CD8-positive, alpha-beta T cell (primary cell): ENCODE measurements at regions of chr11 and their contacts with region 1.

Region 1: DNA sequence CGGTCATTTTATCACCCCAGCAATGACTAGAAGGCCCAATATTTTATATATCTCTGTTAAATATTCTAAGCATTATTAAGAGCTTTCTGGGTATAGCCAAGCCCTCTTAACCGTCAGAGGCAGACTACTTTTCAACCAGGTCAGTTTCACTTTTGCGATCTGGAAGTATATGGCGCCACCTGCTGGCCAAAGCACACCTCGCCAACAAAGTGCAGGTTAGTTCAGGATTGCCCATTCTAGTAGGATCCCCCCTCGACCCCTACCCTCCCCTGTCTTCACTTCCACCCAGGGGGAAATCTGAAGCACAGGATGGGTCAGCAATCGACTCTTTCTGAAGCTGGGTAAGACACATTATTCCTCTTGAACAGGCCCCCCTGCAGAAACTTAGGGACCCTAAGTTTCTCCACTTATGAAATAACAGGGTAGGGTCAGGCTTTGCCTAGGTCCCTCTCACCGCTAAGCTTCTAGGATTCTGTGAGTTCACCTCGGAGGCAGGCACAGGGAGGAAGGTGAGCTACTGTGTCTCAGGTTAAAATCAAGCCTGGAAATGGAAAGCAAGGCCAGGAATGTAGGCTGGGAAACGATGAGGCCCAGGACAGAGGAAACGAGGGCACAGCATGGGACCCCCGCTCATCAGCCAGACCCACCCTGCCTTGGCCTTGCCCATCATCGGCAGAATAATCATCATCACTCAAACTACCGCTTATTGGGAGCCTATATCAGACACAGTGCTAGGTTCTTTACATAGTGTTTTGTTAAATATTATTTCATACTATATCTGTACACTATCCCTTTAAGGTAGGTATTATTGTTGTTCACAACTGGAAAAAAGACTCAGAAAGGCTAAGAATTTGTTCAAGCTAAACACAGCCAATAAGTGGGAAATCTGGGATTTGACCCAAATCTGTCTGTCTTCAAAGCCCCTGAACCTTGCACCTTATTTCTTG is 35.6 kb downstream of the KCNJ1 start:
- DNase-seq: peak; percentile 75 to 93 (median 88)
- ATAC-seq: peak; percentile 81
- H3K4me3 ChIP-seq: peak overlapping the region; percentile 11 to 26
- H3K4me3 Mint-ChIP-seq: peak overlapping the region; percentile 55
- H3K27ac ChIP-seq: peak overlapping the region; percentile 31 to 84
- H3K27ac Mint-ChIP-seq: peak overlapping the region; percentile 80
- H3K4me1 ChIP-seq: peaks cover 9% of the 10 kb centered on the region
- H3K4me1 Mint-ChIP-seq: peaks cover 18% of the 10 kb centered on the region
- H3K27me3 ChIP-seq: no peaks in the 10 kb centered on the region
- H3K27me3 Mint-ChIP-seq: no peaks in the 10 kb centered on the region
- CTCF ChIP-seq: peak; percentile 87

Region 2: GRCh38 chr11:128026596-128026995 is 804.9 kb before region 1 on chr11:
- CTCF ChIA-PET with region 1: interaction called, 22 read pairs
- POLR2A ChIA-PET with region 1: interaction called, 3 read pairs
- intact Hi-C with region 1: loop called (anchors 1 to 2 kb)
- DNase-seq: no peak
- ATAC-seq: no peak
- H3K4me3 ChIP-seq: no peak overlapping the region
- H3K4me3 Mint-ChIP-seq: no peak overlapping the region
- H3K27ac ChIP-seq: no peak overlapping the region
- H3K27ac Mint-ChIP-seq: no peak overlapping the region
- H3K4me1 ChIP-seq: no peaks in the 10 kb centered on the region
- H3K4me1 Mint-ChIP-seq: peaks cover 2% of the 10 kb centered on the region
- H3K27me3 ChIP-seq: no peaks in the 10 kb centered on the region
- H3K27me3 Mint-ChIP-seq: peaks cover 5% of the 10 kb centered on the region
- CTCF ChIP-seq: no peak

Region 3: DNA sequence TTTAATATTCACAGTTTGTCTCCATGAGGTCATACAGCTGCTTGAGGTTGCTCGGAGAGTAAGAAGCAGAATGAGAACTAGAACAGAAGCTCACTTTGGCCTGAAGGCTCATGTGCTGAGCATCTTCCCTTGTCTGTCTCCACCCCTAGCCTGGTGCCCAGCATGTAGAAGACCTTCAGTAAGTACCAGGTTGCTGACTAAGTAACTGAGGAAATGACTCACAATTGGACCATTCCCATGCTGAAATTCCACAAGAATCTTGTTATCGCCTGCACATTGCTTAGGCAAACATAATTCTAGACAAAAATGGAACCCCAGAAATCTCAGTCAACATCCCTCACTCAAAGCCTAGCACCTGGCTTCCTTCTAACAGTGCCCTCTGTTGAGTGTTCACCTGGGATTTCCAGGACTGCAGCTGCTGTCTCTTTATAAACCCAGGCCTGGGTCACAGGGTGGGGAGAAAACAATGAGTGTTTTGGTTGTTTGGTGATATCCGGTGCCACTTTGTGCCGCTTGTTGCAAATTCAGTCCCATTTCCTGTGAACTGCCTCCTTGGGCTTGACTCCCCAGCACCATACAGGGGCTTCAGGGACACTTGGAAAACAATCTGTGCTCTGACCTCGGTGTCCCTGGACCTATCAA is 650.9 kb before region 1 on chr11:
- CTCF ChIA-PET with region 1: interaction called, 162 read pairs
- POLR2A ChIA-PET with region 1: no interaction called
- intact Hi-C with region 1: no loop called
- DNase-seq: peak in 1 of 9 experiments; percentile 23
- ATAC-seq: no peak
- H3K4me3 ChIP-seq: no peak overlapping the region
- H3K4me3 Mint-ChIP-seq: no peak overlapping the region
- H3K27ac ChIP-seq: no peak overlapping the region
- H3K27ac Mint-ChIP-seq: no peak overlapping the region
- H3K4me1 ChIP-seq: no peaks in the 10 kb centered on the region
- H3K4me1 Mint-ChIP-seq: no peaks in the 10 kb centered on the region
- H3K27me3 ChIP-seq: no peaks in the 10 kb centered on the region
- H3K27me3 Mint-ChIP-seq: no peaks in the 10 kb centered on the region
- CTCF ChIP-seq: no peak

Region 4: GRCh38 chr11:128725630-128726319 is 105.7 kb before region 1 on chr11:
- CTCF ChIA-PET with region 1: interaction called, 19 read pairs
- POLR2A ChIA-PET with region 1: no interaction called
- intact Hi-C with region 1: no loop called
- DNase-seq: peak; percentile 19 to 95 (median 67)
- ATAC-seq: peak; percentile 56
- H3K4me3 ChIP-seq: peak overlapping the region; percentile 16 to 25
- H3K4me3 Mint-ChIP-seq: peak overlapping the region; percentile 87
- H3K27ac ChIP-seq: peak overlapping the region; percentile 6 to 69
- H3K27ac Mint-ChIP-seq: peak overlapping the region; percentile 89
- H3K4me1 ChIP-seq: peaks cover 99% of the 10 kb centered on the region
- H3K4me1 Mint-ChIP-seq: peaks cover 98% of the 10 kb centered on the region
- H3K27me3 ChIP-seq: no peaks in the 10 kb centered on the region
- H3K27me3 Mint-ChIP-seq: no peaks in the 10 kb centered on the region
- CTCF ChIP-seq: no peak

Region 5: DNA sequence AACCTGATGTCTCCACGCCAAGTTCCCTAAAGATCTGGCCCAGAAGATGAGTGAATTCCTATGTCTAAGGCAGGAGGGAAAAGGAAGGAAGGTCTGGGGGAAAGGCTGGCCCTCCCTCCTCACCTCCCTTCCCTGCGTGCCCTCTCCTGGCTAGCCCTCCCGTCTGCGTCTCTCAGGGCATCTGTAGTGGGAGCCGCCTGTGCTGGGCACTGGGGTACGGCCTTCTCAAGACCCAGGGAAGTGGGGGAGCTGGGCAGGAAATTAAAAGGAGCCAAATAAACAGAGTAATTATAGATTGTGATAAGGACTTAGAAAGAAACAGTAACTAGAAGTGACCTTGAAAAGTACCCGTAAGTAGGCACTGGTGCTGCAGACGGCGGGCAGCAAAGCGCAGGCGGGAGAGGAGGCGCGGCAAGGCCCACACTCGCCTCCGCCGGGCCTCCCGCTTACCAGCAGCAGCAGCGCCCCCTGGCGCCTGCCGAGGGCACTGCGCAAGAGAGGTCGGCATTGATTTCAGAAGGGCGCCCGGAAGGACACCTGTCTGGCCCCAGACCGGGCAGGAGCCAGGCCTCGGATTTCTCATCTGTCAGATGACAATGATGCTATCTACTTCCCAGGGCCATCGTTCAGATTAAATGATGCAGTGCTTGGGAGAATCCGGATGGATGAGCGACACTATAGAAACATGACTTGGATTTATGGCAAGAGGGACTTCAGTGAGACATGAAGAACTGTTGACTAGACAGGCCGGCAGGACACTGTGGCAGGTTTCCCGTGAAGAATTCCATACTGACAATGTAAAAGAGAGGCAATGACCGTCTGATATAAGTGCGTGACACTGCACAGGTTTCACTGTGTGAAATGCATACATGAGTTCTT is 28.4 kb after region 1 on chr11:
- CTCF ChIA-PET with region 1: interaction called, 15 read pairs
- POLR2A ChIA-PET with region 1: no interaction called
- intact Hi-C with region 1: loop called in 1 of 2 experiments (anchors 2 kb)
- DNase-seq: peak; percentile 64 to 83 (median 75)
- ATAC-seq: peak; percentile 97
- H3K4me3 ChIP-seq: no peak overlapping the region
- H3K4me3 Mint-ChIP-seq: no peak overlapping the region
- H3K27ac ChIP-seq: no peak overlapping the region
- H3K27ac Mint-ChIP-seq: no peak overlapping the region
- H3K4me1 ChIP-seq: no peaks in the 10 kb centered on the region
- H3K4me1 Mint-ChIP-seq: peaks cover 4% of the 10 kb centered on the region
- H3K27me3 ChIP-seq: no peaks in the 10 kb centered on the region
- H3K27me3 Mint-ChIP-seq: peaks cover 2% of the 10 kb centered on the region
- CTCF ChIP-seq: peak; percentile 99